AG04450 (cell line): ENCODE measurements at regions of chr5 and their contacts with region 1.

Region 1: GRCh38 chr5:139633295-139634027 is 14.7 kb upstream of the CXXC5 start:
- DNase-seq: no peak
- H3K4me3 ChIP-seq: no peak overlapping the region
- H3K27ac ChIP-seq: no peak overlapping the region
- H3K27me3 ChIP-seq: no peaks in the 10 kb centered on the region
- CTCF ChIP-seq: peak; percentile 98

Region 2: GRCh38 chr5:139210585-139210984 is 422.9 kb before region 1 on chr5:
- CTCF ChIA-PET with region 1: no interaction called
- POLR2A ChIA-PET with region 1: no interaction called
- DNase-seq: no peak
- H3K4me3 ChIP-seq: no peak overlapping the region
- H3K27ac ChIP-seq: no peak overlapping the region
- H3K27me3 ChIP-seq: peaks cover 9% of the 10 kb centered on the region
- CTCF ChIP-seq: no peak

Region 3: DNA sequence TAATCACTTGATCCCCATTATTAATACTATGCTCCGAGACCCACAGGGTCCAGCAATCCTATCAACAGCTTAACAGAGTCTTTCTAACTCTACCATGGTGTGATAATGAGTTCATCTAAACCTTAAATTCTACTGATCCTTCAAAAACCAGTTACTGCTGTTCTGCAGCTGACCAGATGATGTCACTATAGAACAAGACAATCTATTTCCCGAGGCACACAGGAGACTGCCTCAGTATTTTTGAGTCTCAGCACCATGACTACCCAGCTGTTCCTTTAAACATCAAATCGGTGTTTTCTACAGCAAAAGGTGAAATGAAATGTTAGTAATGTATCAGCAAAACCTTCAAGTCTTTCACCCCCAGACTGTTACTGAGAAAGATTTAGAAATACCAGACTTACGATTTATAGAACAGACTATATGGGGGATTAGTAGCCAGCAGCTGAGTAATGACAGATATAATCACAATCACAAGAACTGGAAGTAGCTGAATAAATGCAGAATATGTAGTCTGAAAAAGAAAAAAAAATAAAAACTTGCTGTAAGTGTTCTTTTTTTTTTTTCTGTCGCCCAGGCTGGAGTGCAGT is 211.1 kb before region 1 on chr5:
- CTCF ChIA-PET with region 1: interaction called, 37 read pairs
- POLR2A ChIA-PET with region 1: interaction called, 3 read pairs
- DNase-seq: peak; percentile 51
- H3K4me3 ChIP-seq: no peak overlapping the region
- H3K27ac ChIP-seq: no peak overlapping the region
- H3K27me3 ChIP-seq: no peaks in the 10 kb centered on the region
- CTCF ChIP-seq: peak; percentile 90

Region 4: GRCh38 chr5:139543423-139543991 is 90.0 kb before region 1 on chr5:
- CTCF ChIA-PET with region 1: no interaction called
- POLR2A ChIA-PET with region 1: no interaction called
- DNase-seq: no peak
- H3K4me3 ChIP-seq: no peak overlapping the region
- H3K27ac ChIP-seq: no peak overlapping the region
- H3K27me3 ChIP-seq: no peaks in the 10 kb centered on the region
- CTCF ChIP-seq: no peak

Region 5: DNA sequence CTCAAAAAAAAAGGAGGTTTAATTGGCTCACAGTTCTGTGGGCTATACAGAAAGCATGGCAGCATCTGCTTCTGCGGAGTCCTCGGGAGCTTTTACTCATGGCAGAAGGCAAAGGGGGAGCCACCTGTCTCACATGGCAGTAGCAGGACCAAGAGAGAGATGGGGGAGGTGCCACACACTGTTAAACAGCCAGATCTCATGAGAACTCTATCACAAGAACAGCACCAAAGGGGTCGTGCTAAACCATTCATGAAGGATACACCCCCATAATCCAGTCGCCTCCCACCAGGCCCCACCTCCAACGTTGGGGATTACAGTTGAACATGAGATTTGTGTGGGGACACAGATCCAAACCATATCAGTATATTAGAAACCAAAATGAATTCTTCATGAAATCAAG is 13.6 kb before region 1 on chr5:
- CTCF ChIA-PET with region 1: interaction called, 27 read pairs
- POLR2A ChIA-PET with region 1: no interaction called
- DNase-seq: no peak
- H3K4me3 ChIP-seq: no peak overlapping the region
- H3K27ac ChIP-seq: no peak overlapping the region
- H3K27me3 ChIP-seq: no peaks in the 10 kb centered on the region
- CTCF ChIP-seq: no peak

Region 6: GRCh38 chr5:139690064-139690802 is 56.8 kb after region 1 on chr5:
- CTCF ChIA-PET with region 1: interaction called, 52 read pairs
- POLR2A ChIA-PET with region 1: interaction called, 4 read pairs
- DNase-seq: no peak
- H3K4me3 ChIP-seq: no peak overlapping the region
- H3K27ac ChIP-seq: peak overlapping the region; percentile 31
- H3K27me3 ChIP-seq: no peaks in the 10 kb centered on the region
- CTCF ChIP-seq: peak; percentile 56

Region 7: GRCh38 chr5:139716966-139717620 is 83.6 kb after region 1 on chr5:
- CTCF ChIA-PET with region 1: no interaction called
- POLR2A ChIA-PET with region 1: no interaction called
- DNase-seq: no peak
- H3K4me3 ChIP-seq: no peak overlapping the region
- H3K27ac ChIP-seq: no peak overlapping the region
- H3K27me3 ChIP-seq: no peaks in the 10 kb centered on the region
- CTCF ChIP-seq: no peak

Region 8: DNA sequence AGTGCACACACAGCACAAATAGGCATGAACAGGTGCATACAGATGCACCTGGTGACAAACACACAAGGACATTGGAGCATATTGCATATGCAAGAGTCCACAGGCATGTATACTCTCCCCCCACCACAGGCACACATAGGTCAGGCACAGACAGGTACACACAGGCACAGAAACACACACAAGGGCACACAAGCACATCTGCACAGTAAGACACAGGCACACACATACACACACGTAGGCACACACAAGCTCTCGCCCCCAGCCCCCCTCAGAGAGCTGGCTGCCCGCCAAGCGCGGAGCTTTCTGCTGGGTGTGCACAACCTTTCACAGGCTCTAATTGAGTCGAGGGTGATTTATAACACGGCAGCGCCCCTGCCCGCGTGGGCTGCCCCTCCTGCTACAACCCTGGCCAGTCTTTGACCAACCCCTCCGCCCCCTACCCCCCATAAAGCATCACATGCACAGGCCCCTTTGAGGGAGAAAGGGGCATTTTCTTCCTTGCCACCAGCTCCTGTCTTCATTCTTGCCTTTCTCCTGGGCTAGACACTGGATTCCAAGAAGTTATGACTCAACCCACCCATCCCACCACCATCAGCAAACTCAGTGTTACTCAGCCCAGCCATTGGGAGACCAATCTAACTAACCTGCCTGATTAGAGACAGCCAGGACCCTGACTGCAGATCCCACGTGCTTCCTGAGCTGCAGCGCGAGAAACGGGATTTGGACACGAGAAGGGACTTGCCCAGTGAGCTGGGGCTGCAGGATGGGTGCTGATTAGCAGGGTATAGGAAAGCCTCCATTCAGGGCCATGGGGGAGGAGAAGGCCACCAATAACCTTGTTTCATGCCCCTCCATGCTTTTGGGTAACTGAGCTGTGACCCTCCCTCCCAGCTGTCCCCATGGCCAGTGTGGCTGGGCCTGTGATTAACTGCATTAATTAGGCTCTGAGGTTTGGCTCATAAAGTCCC is 119.3 kb after region 1 on chr5:
- CTCF ChIA-PET with region 1: interaction called, 12 read pairs
- POLR2A ChIA-PET with region 1: interaction called, 8 read pairs
- DNase-seq: no peak
- H3K4me3 ChIP-seq: no peak overlapping the region
- H3K27ac ChIP-seq: no peak overlapping the region
- H3K27me3 ChIP-seq: peaks cover 33% of the 10 kb centered on the region
- CTCF ChIP-seq: no peak

Region 9: GRCh38 chr5:139774980-139775661 is 141.7 kb after region 1 on chr5:
- CTCF ChIA-PET with region 1: interaction called, 314 read pairs
- POLR2A ChIA-PET with region 1: no interaction called
- DNase-seq: no peak
- H3K4me3 ChIP-seq: no peak overlapping the region
- H3K27ac ChIP-seq: no peak overlapping the region
- H3K27me3 ChIP-seq: peaks cover 30% of the 10 kb centered on the region
- CTCF ChIP-seq: peak; percentile 80